ENCODE measurements at regions of chr7 and their contacts with region 1.

Region 1: DNA sequence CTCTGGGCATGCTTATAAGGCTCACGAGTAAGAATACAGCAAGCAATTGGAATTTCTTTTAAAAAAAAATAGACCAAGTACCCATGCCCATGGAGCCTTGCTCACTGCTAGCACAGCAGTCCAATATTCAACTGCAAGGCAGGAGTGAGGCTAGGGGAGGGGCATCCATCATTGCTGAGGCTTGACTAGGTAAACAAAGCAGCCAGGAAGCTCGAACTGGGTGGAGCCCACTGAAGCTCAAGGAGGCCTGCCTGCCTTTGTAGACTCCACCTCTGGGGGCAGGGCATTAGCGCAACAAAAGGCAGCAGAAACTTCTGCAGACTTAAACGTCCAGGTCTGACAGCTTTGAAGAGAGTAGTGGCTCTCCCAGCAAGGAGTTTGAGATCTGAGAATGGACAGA is 84.0 kb upstream of the STEAP1 start:
- DNase-seq: no peak
- H3K4me3 ChIP-seq: no peak overlapping the region
- H3K27me3 ChIP-seq: no peaks in the 10 kb centered on the region
- CTCF ChIP-seq: no peak

Region 2: GRCh38 chr7:88268863-88269262 is 1801.4 kb before region 1 on chr7:
- CTCF ChIA-PET with region 1: no interaction called
- POLR2A ChIA-PET with region 1: interaction called, 10 read pairs
- DNase-seq: no peak
- H3K4me3 ChIP-seq: no peak overlapping the region
- H3K27me3 ChIP-seq: no peaks in the 10 kb centered on the region
- CTCF ChIP-seq: no peak

Measured in BJ (cell line).